Activated CD8-positive, alpha-beta T cell treated with anti-CD3 and anti-CD28 coated beads for 36 hours (primary cell): ENCODE measurements at regions of chr17 and their contacts with region 1.

Region 1: DNA sequence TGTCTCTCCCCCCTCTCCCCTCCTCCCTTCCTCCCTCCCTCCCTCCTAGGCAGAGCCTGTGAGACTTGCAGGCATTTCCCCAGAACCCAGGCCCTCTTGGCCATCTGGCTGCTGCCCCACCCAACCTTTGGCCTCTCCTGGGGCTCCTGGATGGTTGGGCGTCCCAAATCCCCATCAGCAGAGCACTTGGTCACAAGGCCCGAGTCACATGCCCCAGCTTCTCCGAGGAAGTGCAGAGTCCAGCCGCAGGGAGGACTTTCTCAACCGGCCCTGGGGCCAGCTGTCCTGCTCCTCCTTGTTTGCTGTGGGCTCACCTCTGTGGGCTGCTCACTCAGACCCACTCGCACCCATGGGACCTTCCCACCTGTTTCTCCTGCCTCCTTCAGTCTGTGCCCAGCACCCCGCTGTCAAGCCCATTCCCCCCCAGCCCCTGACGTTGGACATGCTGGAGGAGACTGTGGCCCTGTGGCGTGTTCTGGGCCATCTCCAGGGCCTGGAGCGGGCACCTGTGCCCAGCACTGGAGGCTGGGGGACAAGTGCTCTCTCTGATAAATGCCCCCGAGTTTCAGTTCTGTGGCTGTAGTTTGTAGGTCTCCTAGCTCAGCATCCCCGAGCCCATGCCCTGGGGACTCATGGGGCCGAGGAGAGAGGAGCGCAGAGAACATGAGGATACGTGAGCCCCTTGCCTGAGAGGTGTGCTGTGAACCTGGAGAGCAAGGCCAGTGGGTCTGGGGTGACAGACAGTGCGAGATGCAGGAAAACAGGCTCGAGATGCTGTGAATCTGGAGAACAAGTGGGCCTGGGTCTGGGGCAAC is 42.3 kb upstream of the ZNF750 start:
- DNase-seq: no peak
- ATAC-seq: peak; percentile 12
- H3K4me3 Mint-ChIP-seq: peak overlapping the region; percentile 71
- H3K27ac Mint-ChIP-seq: peak overlapping the region; percentile 93
- H3K4me1 Mint-ChIP-seq: peaks cover 74% of the 10 kb centered on the region
- H3K27me3 Mint-ChIP-seq: no peaks in the 10 kb centered on the region
- CTCF ChIP-seq: no peak

Region 2: GRCh38 chr17:82781894-82782274 is 100.2 kb before region 1 on chr17:
- CTCF ChIA-PET with region 1: interaction called, 23 read pairs
- POLR2A ChIA-PET with region 1: no interaction called
- intact Hi-C with region 1: no loop called
- DNase-seq: peak; percentile 86
- ATAC-seq: peak; percentile 100
- H3K4me3 Mint-ChIP-seq: no peak overlapping the region
- H3K27ac Mint-ChIP-seq: no peak overlapping the region
- H3K4me1 Mint-ChIP-seq: peaks cover 7% of the 10 kb centered on the region
- H3K27me3 Mint-ChIP-seq: no peaks in the 10 kb centered on the region
- CTCF ChIP-seq: peak; percentile 96

Region 3: GRCh38 chr17:82863941-82864774 is 17.9 kb before region 1 on chr17:
- CTCF ChIA-PET with region 1: interaction called, 5 read pairs
- POLR2A ChIA-PET with region 1: interaction called, 34 read pairs
- intact Hi-C with region 1: no loop called
- DNase-seq: peak; percentile 97
- ATAC-seq: peak; percentile 85
- H3K4me3 Mint-ChIP-seq: peak overlapping the region; percentile 74
- H3K27ac Mint-ChIP-seq: peak overlapping the region; percentile 97
- H3K4me1 Mint-ChIP-seq: peaks cover 74% of the 10 kb centered on the region
- H3K27me3 Mint-ChIP-seq: no peaks in the 10 kb centered on the region
- CTCF ChIP-seq: no peak

Region 4: GRCh38 chr17:82871056-82871903 is 10.8 kb before region 1 on chr17:
- CTCF ChIA-PET with region 1: interaction called, 11 read pairs
- POLR2A ChIA-PET with region 1: interaction called, 34 read pairs
- intact Hi-C with region 1: no loop called
- DNase-seq: peak; percentile 76
- ATAC-seq: peak; percentile 92
- H3K4me3 Mint-ChIP-seq: no peak overlapping the region
- H3K27ac Mint-ChIP-seq: peak overlapping the region; percentile 46
- H3K4me1 Mint-ChIP-seq: peaks cover 38% of the 10 kb centered on the region
- H3K27me3 Mint-ChIP-seq: no peaks in the 10 kb centered on the region
- CTCF ChIP-seq: no peak